ENCODE measurements at regions of chr17 and their contacts with region 1.

Region 1: DNA sequence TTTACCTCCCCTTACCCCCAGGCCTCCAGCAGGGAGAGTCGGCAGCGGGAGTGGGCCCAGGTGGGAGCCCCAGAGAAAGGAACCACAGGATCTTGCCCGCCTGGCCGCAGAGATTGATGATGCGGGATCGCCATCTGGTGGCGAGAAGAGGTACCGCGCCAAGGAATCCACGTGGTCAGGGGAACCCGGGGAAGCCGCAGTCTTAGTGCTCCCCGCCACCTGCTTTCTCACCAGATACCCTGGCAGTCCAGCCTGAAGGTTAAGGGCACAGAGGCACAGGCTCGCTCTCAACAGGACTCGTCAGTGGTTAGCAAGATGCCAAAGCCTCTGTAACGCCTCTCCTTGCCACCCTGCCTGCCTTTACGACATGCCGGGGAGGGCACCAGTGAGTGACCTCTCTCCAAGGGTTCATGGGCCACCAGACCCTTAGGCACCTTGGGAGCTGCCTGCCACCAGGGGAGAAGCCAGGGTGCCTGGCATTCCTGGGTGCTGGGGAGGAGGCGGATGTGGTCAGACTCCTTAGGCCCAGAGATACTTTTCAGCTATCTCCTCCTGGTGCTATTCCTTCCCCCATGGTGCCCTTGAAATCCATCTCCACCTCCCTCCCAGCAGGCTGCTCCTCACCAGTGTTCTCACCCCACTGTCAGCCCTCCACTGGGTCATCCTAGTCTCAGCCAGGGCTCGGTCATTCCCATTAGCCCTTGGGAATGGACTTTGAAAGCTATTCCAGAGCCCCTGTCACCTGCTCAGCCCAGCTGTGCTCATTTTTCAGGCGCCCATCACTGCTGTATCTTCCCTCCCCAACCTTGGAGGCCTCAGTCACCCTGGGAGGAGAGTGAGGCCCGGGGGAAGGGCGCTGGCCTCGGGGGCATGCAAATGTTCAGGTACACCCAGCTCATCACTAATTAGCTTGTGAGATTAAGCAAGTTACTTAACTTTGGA is 5.5 kb upstream of the RHBDF2 start:
- DNase-seq: peak; percentile 79 to 90 (median 84)
- H3K4me3 ChIP-seq: no peak overlapping the region
- H3K4me3 Mint-ChIP-seq: peak overlapping the region in 1 of 7 donors; percentile 58
- H3K27ac ChIP-seq: no peak overlapping the region
- H3K27ac Mint-ChIP-seq: peak overlapping the region in 7 of 8 donors; percentile 12 to 87 (median 54)
- H3K4me1 ChIP-seq: peaks cover 27% of the 10 kb centered on the region
- H3K4me1 Mint-ChIP-seq: peaks cover 20 to 41% (median 23%) of the 10 kb centered on the region in 3 donors
- H3K27me3 ChIP-seq: no peaks in the 10 kb centered on the region
- H3K27me3 Mint-ChIP-seq: no peaks in the 10 kb centered on the region

Region 2: DNA sequence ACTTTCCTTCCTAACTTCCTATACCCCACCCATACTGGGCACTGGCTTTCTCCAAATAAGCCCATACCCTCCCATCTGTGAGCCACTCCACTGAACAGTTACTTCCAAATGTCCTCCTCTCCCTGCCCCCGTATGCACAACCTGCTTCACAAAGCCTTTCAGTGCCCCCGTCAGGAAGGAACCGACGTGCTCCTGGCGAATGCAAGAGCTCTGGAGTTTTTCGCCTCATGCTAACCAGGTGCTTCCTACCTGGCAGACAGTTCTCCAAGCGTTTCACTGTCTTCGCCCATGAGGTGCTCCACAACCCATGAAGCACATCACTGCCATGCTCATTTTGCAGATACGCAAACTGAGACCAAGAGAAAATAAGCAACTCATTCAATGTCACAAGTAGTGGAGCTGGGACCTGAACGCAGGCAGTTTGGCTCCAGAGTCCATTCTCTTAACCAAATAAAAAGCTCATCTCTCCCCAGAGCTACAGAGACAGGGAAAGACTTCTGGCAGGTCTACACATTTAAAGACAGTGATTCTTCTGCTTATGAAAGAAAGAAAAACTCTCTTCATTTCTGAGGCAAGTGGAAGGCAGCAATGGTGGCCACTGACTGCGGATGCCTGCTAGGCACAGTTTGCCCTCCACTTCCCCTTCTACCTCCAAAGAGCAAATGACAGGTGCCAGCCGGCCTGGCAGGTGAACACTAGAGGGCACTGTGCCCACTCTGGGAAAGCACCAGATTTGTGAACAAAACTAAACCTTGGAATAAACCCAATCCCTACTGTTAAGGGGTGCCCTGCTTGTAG is 98.4 kb before region 1 on chr17:
- CTCF ChIA-PET with region 1: interaction called, 15 read pairs
- POLR2A ChIA-PET with region 1: interaction called, 5 read pairs
- DNase-seq: peak; percentile 40 to 77 (median 55)
- H3K4me3 ChIP-seq: no peak overlapping the region
- H3K4me3 Mint-ChIP-seq: no peak overlapping the region
- H3K27ac ChIP-seq: no peak overlapping the region
- H3K27ac Mint-ChIP-seq: peak overlapping the region in 6 of 8 donors; percentile 10 to 82 (median 40)
- H3K4me1 ChIP-seq: no peaks in the 10 kb centered on the region
- H3K4me1 Mint-ChIP-seq: peaks cover 7 to 11% (median 9%) of the 10 kb centered on the region in 3 donors
- H3K27me3 ChIP-seq: no peaks in the 10 kb centered on the region
- H3K27me3 Mint-ChIP-seq: no peaks in the 10 kb centered on the region

Region 3: DNA sequence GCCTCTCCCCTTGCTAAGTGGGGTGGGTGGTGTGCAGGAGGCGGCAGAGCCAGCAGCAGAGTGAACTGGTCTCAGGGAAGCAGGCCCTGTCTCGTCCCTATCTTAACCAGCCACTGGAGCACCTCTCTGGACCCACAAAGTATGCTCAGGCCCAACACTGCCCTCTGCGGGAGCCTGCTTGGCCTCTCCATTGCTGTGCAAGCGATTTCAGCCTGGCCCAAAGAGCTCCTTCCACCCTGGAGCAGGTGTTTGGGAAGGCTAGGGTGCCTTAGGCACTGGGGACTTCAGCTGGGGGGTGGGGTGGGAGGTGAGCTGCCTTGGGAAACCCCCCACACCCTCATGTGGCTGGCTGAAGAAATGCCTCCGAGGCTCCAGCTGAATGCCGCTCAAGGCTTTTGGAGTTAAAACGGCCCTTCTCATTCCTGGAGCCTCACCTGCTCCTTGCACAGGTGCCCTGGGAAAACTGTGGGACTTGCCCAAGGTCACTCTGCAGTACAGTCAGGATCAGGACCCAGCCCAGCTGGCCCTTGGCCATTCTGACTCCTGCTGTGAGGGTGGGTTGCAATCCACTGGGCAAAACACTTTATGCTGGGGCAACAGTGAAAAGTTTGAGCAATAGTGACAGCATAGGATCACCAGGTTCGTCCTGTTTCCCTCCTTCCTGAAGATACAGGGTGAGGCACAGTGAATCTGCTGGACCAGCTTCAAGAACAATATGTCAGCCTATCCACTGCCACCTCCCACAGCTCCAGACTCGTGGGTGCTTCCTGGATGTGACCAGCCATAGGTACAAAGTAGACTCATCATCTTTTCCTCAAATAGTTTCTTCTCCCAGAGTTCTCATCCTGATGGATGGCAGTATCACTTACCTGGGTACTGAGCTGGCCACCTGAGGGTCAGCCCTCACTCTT is 47.8 kb before region 1 on chr17:
- CTCF ChIA-PET with region 1: interaction called, 11 read pairs
- POLR2A ChIA-PET with region 1: interaction called, 3 read pairs
- DNase-seq: no peak
- H3K4me3 ChIP-seq: no peak overlapping the region
- H3K4me3 Mint-ChIP-seq: no peak overlapping the region
- H3K27ac ChIP-seq: no peak overlapping the region
- H3K27ac Mint-ChIP-seq: no peak overlapping the region
- H3K4me1 ChIP-seq: no peaks in the 10 kb centered on the region
- H3K4me1 Mint-ChIP-seq: no peaks in the 10 kb centered on the region
- H3K27me3 ChIP-seq: no peaks in the 10 kb centered on the region
- H3K27me3 Mint-ChIP-seq: no peaks in the 10 kb centered on the region

Region 4: DNA sequence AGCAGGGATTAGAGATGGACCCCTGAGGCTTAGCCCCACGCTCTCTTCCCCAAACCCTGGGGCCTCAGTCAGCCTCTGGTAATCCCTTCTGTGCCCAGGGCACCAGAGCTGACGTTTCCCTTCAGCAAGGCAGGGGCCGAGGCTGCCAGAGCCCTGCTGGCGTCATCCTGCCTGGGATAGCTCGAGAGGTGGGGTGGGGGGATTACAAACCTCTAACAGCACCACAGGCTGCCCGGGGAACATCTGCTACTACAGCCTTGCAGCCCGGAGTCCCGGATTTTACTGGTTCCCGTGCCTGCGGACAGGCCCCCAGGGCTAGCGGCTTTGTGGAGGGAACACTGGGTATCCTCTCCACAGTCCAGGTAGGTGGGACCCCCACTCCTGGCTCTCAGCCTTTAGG is 39.3 kb before region 1 on chr17 and contains the start of gene AANAT:
- CTCF ChIA-PET with region 1: interaction called, 74 read pairs
- POLR2A ChIA-PET with region 1: interaction called, 7 read pairs
- DNase-seq: no peak
- H3K4me3 ChIP-seq: no peak within 1 kb of the TSS
- H3K4me3 Mint-ChIP-seq: no peak within 1 kb of the TSS
- H3K27ac ChIP-seq: no peak within 1 kb of the TSS
- H3K27ac Mint-ChIP-seq: peak within 1 kb of the TSS in 3 of 8 donors; percentile 23 to 36 (median 32)
- H3K4me1 ChIP-seq: no peaks in the 10 kb centered on the region
- H3K4me1 Mint-ChIP-seq: peaks cover 0 to 5% (median 3%) of the 10 kb centered on the region in 3 donors
- H3K27me3 ChIP-seq: no peaks in the 10 kb centered on the region
- H3K27me3 Mint-ChIP-seq: no peaks in the 10 kb centered on the region
- total RNA-seq, gene AANAT: not detected

Region 5: DNA sequence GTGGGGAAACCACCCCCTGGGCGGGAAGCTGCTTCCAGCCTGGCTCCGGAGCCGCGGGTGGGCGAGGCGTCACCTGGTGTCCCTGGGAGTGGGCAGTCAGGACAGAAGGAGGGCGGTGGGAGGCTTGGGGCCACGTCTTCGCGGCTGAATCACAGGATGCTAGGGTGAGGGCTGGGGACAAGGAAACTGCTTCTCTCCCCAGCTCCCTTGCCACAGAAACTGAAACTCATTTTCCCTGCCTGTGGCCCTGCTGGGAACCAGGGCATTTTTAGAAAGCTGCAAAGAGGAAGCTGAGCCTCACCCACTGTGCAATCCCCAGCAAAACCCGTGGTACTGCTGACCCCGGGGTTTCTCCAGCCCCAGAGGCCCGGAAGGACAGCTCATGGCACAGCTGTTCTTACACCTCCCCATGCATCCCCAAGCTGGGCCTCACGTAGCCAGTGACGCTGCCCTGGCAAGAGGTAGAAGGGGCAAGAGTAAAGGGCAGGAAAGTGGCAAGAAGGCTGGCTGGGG is 13.6 kb before region 1 on chr17:
- CTCF ChIA-PET with region 1: interaction called, 15 read pairs
- POLR2A ChIA-PET with region 1: interaction called, 9 read pairs
- DNase-seq: peak in 3 of 5 donors; percentile 28 to 41 (median 30)
- H3K4me3 ChIP-seq: peak overlapping the region; percentile 51
- H3K4me3 Mint-ChIP-seq: peak overlapping the region; percentile 78 to 92 (median 90)
- H3K27ac ChIP-seq: peak overlapping the region; percentile 72
- H3K27ac Mint-ChIP-seq: peak overlapping the region; percentile 82 to 99 (median 98)
- H3K4me1 ChIP-seq: peaks cover 42% of the 10 kb centered on the region
- H3K4me1 Mint-ChIP-seq: peaks cover 56 to 88% (median 57%) of the 10 kb centered on the region in 3 donors
- H3K27me3 ChIP-seq: no peaks in the 10 kb centered on the region
- H3K27me3 Mint-ChIP-seq: no peaks in the 10 kb centered on the region

Region 6: DNA sequence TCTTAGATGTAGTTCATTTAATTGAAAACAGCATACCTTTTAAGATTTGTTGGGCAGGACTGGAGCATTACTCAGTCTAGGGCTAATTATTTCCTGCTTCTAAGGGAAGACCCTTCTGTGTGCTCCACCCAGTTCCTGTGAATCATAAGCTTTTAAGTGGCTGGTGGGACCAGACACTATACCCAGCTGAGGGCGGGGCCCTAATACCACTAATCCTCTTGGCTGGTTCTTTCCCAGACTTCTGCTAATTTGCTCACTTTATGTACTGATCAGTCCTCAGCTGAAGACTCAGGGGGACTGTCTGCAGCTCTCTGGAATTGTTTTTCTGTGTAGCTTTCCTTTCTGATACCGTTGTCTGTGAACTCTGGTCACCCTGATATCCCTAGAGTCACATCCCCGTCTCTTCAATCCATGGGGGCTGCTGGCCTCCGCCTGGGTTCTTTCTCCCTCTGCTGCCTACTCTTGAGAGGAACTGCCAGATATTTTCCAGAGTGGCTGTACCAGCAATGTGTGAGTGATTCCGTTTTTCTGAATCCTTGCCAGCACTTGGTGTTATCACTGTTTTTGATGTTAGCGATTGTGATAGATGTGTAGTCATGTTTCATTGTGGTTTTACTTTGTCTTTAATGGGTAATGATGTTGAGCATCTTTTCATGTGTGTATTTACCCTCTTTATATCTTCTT is 266.3 kb after region 1 on chr17:
- CTCF ChIA-PET with region 1: no interaction called
- POLR2A ChIA-PET with region 1: interaction called, 14 read pairs
- DNase-seq: peak; percentile 38 to 78 (median 61)
- H3K4me3 ChIP-seq: peak overlapping the region; percentile 26
- H3K4me3 Mint-ChIP-seq: peak overlapping the region; percentile 60 to 89 (median 85)
- H3K27ac ChIP-seq: peak overlapping the region; percentile 61
- H3K27ac Mint-ChIP-seq: peak overlapping the region; percentile 92 to 99 (median 98)
- H3K4me1 ChIP-seq: peaks cover 13% of the 10 kb centered on the region
- H3K4me1 Mint-ChIP-seq: peaks cover 23 to 35% (median 26%) of the 10 kb centered on the region in 3 donors
- H3K27me3 ChIP-seq: no peaks in the 10 kb centered on the region
- H3K27me3 Mint-ChIP-seq: no peaks in the 10 kb centered on the region

Measured in CD8-positive, alpha-beta memory T cell (primary cell).